Psoas muscle (tissue), 8 donors: ENCODE measurements at regions of chr1 and their contacts with region 1.

Region 1: DNA sequence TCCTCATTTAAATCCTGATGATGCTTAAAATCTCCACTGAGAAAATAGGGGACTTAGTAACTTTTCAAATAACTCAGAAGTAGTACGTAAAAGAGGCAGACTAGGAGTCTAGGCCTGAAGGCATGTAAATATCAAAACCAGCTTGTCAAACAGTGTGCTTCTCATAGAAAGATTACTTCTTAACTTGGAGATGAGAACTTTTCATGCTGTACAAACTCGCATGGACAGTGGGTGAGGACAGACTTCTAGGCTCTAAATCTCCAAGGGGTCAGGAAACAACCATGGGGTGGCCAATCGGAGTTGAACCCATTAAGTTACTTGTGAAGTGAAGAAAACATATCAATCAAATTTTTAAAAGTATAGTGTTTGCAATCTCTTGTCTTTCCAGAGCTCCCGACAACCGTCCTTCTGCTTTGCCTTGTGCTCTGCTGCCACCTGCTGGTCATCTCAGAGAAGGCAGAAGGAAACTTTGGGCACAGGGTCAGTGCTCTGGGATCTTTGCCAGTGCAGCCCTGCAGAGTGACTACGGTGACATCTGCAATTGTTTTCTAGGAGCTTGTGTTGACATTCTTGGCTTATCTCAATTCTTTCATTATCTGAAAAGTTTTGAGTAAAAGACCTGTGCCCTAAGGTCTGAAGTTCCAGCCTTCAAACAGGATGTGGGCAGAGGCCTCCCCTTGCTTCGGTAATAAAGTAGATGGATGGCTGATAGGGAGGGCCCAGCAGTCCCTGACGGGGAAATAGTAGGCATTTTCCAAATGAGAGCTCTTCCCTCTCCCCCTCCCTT is 105.1 kb upstream of the PDE4B start:
- DNase-seq: peak; percentile 81 to 89
- ATAC-seq: peak; percentile 84 to 95 (median 88)
- H3K4me3 ChIP-seq: no peak overlapping the region
- H3K27ac ChIP-seq: no peak overlapping the region
- H3K4me1 ChIP-seq: peaks cover 14% of the 10 kb centered on the region
- H3K27me3 ChIP-seq: no peaks in the 10 kb centered on the region
- CTCF ChIP-seq: peak; percentile 99

Region 2: DNA sequence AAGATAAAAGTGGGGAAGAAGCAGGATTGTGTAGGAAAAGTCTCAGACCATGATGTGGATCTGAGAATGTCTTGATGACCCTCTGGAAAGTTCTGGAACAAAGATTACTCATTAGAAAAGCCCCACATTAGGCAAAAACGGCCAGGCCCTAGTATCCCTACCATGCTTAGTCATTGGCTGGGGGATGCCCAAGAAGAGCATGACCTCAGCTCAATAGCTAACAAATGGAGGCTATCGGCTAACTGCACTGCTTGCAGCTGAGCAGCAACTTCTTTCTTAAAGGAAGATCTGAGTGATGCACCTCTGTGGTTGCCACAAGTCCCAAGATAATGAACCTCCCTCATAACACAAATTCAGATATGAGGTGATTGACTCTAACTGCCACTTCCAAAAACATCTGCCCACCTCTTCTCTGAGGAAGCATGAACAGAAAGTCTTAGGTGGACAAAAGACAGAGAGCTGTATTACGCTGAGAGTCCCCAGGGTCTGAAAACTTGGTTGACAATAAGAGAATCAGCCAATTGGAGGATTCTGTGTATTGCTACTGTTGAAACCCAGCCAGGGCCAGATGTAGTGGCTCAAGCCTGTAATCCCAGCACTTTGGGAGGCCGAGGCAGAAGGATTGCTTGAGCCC is 604.2 kb before region 1 on chr1:
- intact Hi-C with region 1: loop called in 1 of 2 experiments (anchors 5 kb)
- DNase-seq: no peak
- ATAC-seq: no peak
- H3K4me3 ChIP-seq: no peak overlapping the region
- H3K27ac ChIP-seq: no peak overlapping the region
- H3K4me1 ChIP-seq: no peaks in the 10 kb centered on the region
- H3K27me3 ChIP-seq: no peaks in the 10 kb centered on the region
- CTCF ChIP-seq: no peak

Region 3: DNA sequence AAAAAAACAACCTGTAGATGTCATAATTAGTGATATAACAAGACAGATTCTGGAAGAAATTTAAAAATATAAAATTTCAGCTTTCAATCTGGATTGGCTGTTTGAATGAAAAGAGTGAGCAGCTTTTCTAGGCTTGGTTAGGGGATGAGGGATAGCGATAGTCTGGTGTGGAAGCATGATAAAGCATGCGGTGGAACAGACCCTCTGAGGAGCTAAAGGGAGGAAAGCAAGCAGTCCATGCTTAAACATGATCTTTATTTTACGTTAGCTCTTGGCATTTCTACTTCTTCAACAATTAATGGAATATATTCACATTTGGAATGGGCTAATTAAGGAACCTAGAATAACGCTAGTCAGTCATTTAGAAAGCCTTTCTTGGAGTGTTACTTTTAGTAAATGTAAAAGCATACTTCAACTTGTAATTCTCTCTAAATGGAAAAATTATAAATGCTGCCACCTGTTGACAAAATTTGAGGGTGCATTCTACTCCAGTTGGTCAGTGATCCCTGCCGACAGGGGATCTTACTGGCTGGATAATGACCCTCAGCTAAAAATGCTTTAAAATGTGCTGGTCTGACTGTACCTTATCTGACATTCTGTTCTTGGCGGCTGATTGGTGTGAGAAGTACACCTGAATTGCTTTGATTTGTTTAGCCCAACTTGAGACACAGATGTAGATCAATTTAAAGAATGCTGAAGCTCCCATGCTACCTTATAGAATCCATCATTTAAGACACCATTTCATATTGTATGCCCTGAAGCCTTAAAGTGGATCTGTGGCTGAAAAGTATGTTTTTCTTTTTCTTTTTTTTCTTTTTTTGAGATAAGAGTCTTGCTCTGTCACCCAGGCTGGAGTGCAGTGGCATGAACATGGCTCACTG is 478.4 kb before region 1 on chr1:
- intact Hi-C with region 1: loop called in 1 of 2 experiments (anchors 10 kb)
- DNase-seq: no peak
- ATAC-seq: peak; percentile 28 to 68 (median 40)
- H3K4me3 ChIP-seq: no peak overlapping the region
- H3K27ac ChIP-seq: no peak overlapping the region
- H3K4me1 ChIP-seq: no peaks in the 10 kb centered on the region
- H3K27me3 ChIP-seq: no peaks in the 10 kb centered on the region
- CTCF ChIP-seq: peak; percentile 56

Region 4: GRCh38 chr1:65235867-65236805 is 451.5 kb before region 1 on chr1:
- intact Hi-C with region 1: loop called in 1 of 2 experiments (anchors 10 kb)
- DNase-seq: no peak
- ATAC-seq: no peak
- H3K4me3 ChIP-seq: no peak overlapping the region
- H3K27ac ChIP-seq: no peak overlapping the region
- H3K4me1 ChIP-seq: no peaks in the 10 kb centered on the region
- H3K27me3 ChIP-seq: peaks cover 0 to 2% (median 0%) of the 10 kb centered on the region in 3 donors
- CTCF ChIP-seq: peak; percentile 42

Region 5: DNA sequence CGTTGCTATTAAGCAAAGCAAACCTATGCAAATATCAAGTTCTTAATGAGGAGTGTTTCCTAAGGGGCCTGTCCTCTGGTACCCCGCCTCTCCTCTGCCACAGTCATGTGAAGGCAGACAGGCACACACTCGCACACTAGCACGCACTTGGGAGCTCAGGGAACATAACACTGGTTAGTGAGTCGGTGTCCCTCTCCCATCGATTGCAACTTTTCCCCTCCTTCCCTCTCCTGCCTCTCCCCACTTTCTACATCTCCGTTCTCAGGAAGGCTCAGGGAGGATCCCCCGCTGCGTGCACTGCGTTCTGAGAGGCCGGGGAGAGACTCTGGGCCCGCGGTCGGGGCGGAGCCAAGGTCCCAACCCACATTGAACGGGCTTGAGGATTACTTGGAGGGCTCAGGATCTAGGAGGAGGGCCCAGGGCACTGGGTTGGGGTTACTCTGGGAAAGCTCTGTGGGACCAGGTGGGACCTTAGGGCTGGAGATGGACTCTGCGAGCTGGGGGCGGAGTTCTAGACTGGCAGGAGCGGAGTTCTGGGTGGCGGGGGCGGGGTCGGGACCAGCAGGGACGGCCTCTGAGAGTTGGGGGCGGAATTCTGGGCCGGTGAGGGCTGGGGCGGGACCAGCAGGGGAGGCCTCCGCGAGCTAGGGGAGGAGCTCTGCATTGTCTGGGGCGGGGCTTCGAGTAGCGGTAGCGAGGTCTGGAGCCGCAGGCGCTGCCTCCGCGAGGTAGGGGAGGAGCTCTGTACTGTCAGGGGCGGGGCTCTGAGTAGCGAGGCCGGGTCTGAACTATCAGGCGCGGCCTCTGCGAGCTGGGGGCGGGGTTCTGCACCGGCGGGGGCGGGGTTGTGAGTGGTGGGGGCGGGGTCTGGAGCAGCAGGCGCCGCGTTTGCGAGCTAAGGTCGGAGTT is 267.7 kb before region 1 on chr1:
- intact Hi-C with region 1: loop called in 1 of 2 experiments (anchors 5 kb)
- DNase-seq: peak; percentile 97 to 99
- ATAC-seq: peak; percentile 92 to 97 (median 93)
- H3K4me3 ChIP-seq: peak overlapping the region; percentile 91
- H3K27ac ChIP-seq: peak overlapping the region; percentile 98
- H3K4me1 ChIP-seq: peaks cover 34% of the 10 kb centered on the region
- H3K27me3 ChIP-seq: no peaks in the 10 kb centered on the region
- CTCF ChIP-seq: no peak

Region 6: GRCh38 chr1:65431111-65431705 is 256.4 kb before region 1 on chr1:
- intact Hi-C with region 1: loop called in 1 of 2 experiments (anchors 5 kb)
- DNase-seq: no peak
- ATAC-seq: peak in 2 of 4 donors; percentile 47 to 70
- H3K4me3 ChIP-seq: no peak overlapping the region
- H3K27ac ChIP-seq: peak overlapping the region; percentile 57
- H3K4me1 ChIP-seq: peaks cover 7% of the 10 kb centered on the region
- H3K27me3 ChIP-seq: no peaks in the 10 kb centered on the region
- CTCF ChIP-seq: peak; percentile 70

Region 7: GRCh38 chr1:65734979-65735378 is 47.4 kb after region 1 on chr1:
- intact Hi-C with region 1: no loop called
- DNase-seq: no peak
- ATAC-seq: no peak
- H3K4me3 ChIP-seq: no peak overlapping the region
- H3K27ac ChIP-seq: no peak overlapping the region
- H3K4me1 ChIP-seq: no peaks in the 10 kb centered on the region
- H3K27me3 ChIP-seq: peaks cover 0 to 2% (median 0%) of the 10 kb centered on the region in 3 donors
- CTCF ChIP-seq: no peak